ENCODE measurements at regions of chr16 and their contacts with region 1.

Region 1: GRCh38 chr16:59123479-59123878 is 389.4 kb upstream of the GOT2 start:
- DNase-seq: no peak
- H3K4me3 ChIP-seq: no peak overlapping the region
- H3K27ac ChIP-seq: no peak overlapping the region
- H3K4me1 ChIP-seq: no peaks in the 10 kb centered on the region; a peak in 1 of 7 replicates
- H3K27me3 ChIP-seq: peaks cover 0 to 2% (median 0%) of the 10 kb centered on the region in 4 experiments; a peak in 1 of 7 replicates
- CTCF ChIP-seq: no peak
- EP300 ChIP-seq: no peak
- POLR2A ChIP-seq: no peak
- RAD21 ChIP-seq: no peak

Region 2: GRCh38 chr16:59144841-59145240 is 21.4 kb after region 1 on chr16:
- CTCF ChIA-PET with region 1: interaction called, 11 read pairs
- POLR2A ChIA-PET with region 1: no interaction called
- DNase-seq: no peak
- H3K4me3 ChIP-seq: no peak overlapping the region
- H3K27ac ChIP-seq: no peak overlapping the region
- H3K4me1 ChIP-seq: no peaks in the 10 kb centered on the region
- H3K27me3 ChIP-seq: no peaks in the 10 kb centered on the region
- CTCF ChIP-seq: no peak
- EP300 ChIP-seq: no peak
- POLR2A ChIP-seq: no peak
- RAD21 ChIP-seq: no peak

Measured in H1 (cell line).